Activated CD8-positive, alpha-beta memory T cell treated with anti-CD3 and anti-CD28 coated beads, Interleukin-2, amount 10 ng/mL, durations not matched to agents 7 days and 5 days (primary cell): ENCODE measurements at regions of chr4 and their contacts with region 1.

Region 1: GRCh38 chr4:6709230-6710114 is at the start of gene MRFAP1L1:
- DNase-seq: peak; percentile 98
- ATAC-seq: peak; percentile 86
- H3K4me3 Mint-ChIP-seq: peak within 1 kb of the TSS; percentile 93
- H3K27ac Mint-ChIP-seq: peak within 1 kb of the TSS; percentile 98
- H3K4me1 Mint-ChIP-seq: peaks cover 52% of the 10 kb centered on the region
- H3K27me3 Mint-ChIP-seq: no peaks in the 10 kb centered on the region
- total RNA-seq, gene MRFAP1L1: 60.7 to 61.9 TPM

Region 2: GRCh38 chr4:6695660-6696630 is 13.5 kb before region 1 on chr4:
- CTCF ChIA-PET with region 1: interaction called, 43 read pairs
- DNase-seq: peak; percentile 80
- ATAC-seq: peak; percentile 84
- H3K4me3 Mint-ChIP-seq: peak overlapping the region; percentile 30
- H3K27ac Mint-ChIP-seq: peak overlapping the region; percentile 98
- H3K4me1 Mint-ChIP-seq: peaks cover 79% of the 10 kb centered on the region
- H3K27me3 Mint-ChIP-seq: no peaks in the 10 kb centered on the region